A673 (cell line): ENCODE measurements at regions of chr2 and their contacts with region 1.

Region 1: GRCh38 chr2:188024811-188025210 is 266.9 kb upstream of the GULP1 start:
- DNase-seq: no peak
- H3K4me3 ChIP-seq: no peak overlapping the region
- H3K27ac ChIP-seq: no peak overlapping the region
- H3K4me1 ChIP-seq: peaks cover 3% of the 10 kb centered on the region
- H3K27me3 ChIP-seq: no peaks in the 10 kb centered on the region
- CTCF ChIP-seq: no peak

Region 2: DNA sequence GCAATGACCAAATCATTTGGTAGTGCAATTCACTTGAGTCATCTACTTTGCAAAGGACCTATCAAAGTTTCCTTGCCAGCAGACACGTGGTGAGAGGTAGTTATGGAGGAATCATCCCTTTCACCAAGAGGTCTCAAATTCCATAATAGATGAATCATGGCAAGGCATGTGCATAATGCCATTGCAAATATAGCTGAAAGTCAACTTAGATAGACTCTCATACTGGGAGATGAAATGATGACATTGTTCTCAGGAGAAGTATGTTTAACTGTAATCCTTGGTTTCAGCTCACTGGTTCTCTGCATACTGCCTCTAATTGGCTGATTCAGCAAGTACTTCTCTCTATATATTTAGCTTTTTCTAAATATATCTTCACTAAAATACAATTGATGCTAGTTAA is 633.9 kb before region 1 on chr2:
- CTCF ChIA-PET with region 1: no interaction called
- POLR2A ChIA-PET with region 1: no interaction called
- intact Hi-C with region 1: no loop called
- DNase-seq: peak; percentile 49
- H3K4me3 ChIP-seq: no peak overlapping the region
- H3K27ac ChIP-seq: no peak overlapping the region
- H3K4me1 ChIP-seq: no peaks in the 10 kb centered on the region
- H3K27me3 ChIP-seq: no peaks in the 10 kb centered on the region
- CTCF ChIP-seq: no peak

Region 3: DNA sequence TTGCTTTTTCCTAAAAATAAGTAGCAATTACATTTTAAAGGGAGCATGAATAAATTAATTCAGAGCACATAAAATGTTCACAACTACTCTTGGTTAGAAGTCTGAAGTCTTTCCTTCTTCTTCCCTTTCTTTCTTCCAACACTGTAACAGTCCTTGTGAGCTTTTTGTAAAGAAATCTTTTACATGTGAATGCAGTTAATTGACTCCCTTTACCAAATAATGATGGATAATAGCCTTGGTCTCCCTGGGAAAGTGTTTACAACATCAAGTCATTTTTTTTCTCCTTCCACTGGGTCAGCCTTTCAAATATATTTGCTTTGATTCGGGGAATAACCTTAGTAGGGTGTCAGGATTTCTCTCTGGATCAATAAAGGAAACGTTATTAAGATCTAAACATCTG is 615.9 kb before region 1 on chr2:
- CTCF ChIA-PET with region 1: no interaction called
- POLR2A ChIA-PET with region 1: interaction called, 11 read pairs
- intact Hi-C with region 1: no loop called
- DNase-seq: no peak
- H3K4me3 ChIP-seq: no peak overlapping the region
- H3K27ac ChIP-seq: no peak overlapping the region
- H3K4me1 ChIP-seq: peaks cover 10% of the 10 kb centered on the region
- H3K27me3 ChIP-seq: no peaks in the 10 kb centered on the region
- CTCF ChIP-seq: no peak

Region 4: GRCh38 chr2:188158337-188159100 is 133.7 kb after region 1 on chr2:
- CTCF ChIA-PET with region 1: no interaction called
- POLR2A ChIA-PET with region 1: no interaction called
- intact Hi-C with region 1: no loop called
- DNase-seq: no peak
- H3K4me3 ChIP-seq: no peak overlapping the region
- H3K27ac ChIP-seq: no peak overlapping the region
- H3K4me1 ChIP-seq: no peaks in the 10 kb centered on the region
- H3K27me3 ChIP-seq: no peaks in the 10 kb centered on the region
- CTCF ChIP-seq: no peak

Region 5: DNA sequence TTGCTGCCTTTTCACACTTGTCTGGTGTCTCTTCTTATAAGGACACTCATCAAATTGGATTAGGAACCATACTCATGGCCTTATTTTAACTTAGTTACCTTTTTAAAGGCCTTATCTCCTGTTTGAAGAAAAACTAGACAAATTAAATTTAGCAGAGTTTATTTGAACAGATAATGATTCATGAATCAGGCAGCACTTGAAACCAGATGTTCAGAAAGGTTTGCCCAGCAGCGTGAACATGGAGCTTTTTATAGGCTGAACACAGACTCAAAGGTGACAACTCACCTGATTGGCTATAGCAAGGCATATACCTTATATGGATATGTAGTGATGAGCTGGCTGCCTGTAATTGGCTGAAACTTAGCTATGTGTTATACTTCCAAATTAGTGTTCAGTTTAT is 504.9 kb after region 1 on chr2:
- CTCF ChIA-PET with region 1: no interaction called
- POLR2A ChIA-PET with region 1: no interaction called
- intact Hi-C with region 1: no loop called
- DNase-seq: no peak
- H3K4me3 ChIP-seq: no peak overlapping the region
- H3K27ac ChIP-seq: no peak overlapping the region
- H3K4me1 ChIP-seq: peaks cover 9% of the 10 kb centered on the region
- H3K27me3 ChIP-seq: no peaks in the 10 kb centered on the region
- CTCF ChIP-seq: no peak